Natural killer cell (primary cell): ENCODE measurements at regions of chr20 and their contacts with region 1.

Region 1: DNA sequence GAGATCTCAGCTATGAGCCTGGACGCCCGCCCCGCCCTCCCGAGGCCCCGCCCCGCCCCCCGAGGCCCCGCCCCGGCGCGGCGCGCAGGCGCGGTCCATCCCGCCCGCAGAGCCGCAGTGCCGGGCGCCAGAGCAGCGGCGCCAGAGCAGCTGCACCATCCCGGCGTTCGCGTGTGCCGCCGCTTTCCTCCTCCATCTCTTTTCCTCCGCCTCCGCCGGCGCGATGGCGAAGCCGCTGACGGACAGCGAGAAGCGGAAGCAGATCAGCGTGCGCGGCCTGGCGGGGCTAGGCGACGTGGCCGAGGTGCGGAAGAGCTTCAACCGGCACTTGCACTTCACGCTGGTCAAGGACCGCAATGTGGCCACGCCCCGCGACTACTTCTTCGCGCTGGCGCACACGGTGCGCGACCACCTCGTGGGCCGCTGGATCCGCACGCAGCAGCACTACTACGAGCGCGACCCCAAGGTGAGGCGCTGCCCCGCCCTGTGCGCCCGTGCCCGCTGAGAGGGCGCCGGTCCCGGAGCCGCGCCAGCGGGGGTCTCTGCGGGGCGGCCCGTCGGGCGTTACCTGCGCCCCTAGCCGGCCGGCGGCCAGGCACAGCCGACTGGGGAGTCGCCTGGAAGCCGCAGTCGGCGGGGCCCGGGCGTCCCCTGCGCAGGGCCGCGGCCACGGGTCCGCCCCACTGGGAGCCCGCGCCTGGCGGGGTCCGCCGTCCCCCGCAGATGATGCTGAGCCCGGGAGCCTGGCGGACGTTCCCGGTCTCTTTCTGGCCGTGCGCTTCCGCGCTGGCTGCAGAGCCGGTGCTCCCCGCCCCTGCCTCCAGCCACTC is at the start of gene PYGB:
- DNase-seq: peak; percentile 68 to 89
- ATAC-seq: peak; percentile 89 to 91 (median 90)
- H3K4me3 ChIP-seq: peak within 1 kb of the TSS; percentile 94
- H3K4me3 Mint-ChIP-seq: peak within 1 kb of the TSS; percentile 97
- H3K27ac ChIP-seq: peak within 1 kb of the TSS; percentile 56
- H3K27ac Mint-ChIP-seq: peak within 1 kb of the TSS; percentile 74 to 79
- H3K4me1 ChIP-seq: peaks cover 21% of the 10 kb centered on the region
- H3K4me1 Mint-ChIP-seq: peaks cover 28 to 40% of the 10 kb centered on the region in 2 donors
- H3K27me3 ChIP-seq: no peaks in the 10 kb centered on the region
- H3K27me3 Mint-ChIP-seq: peaks cover 7 to 9% of the 10 kb centered on the region in 2 donors
- CTCF ChIP-seq: no peak
- total RNA-seq, gene PYGB: 39.4 to 55.4 (median 47.0) TPM

Region 2: GRCh38 chr20:25195014-25195961 is 52.9 kb before region 1 on chr20 and contains the start of gene ENTPD6:
- intact Hi-C with region 1: loop called (anchors 1 kb)
- DNase-seq: peak; percentile 96
- ATAC-seq: peak; percentile 84 to 91 (median 91)
- H3K4me3 ChIP-seq: peak within 1 kb of the TSS; percentile 82
- H3K4me3 Mint-ChIP-seq: peak within 1 kb of the TSS; percentile 94
- H3K27ac ChIP-seq: peak within 1 kb of the TSS; percentile 89
- H3K27ac Mint-ChIP-seq: peak within 1 kb of the TSS; percentile 79 to 89
- H3K4me1 ChIP-seq: peaks cover 26% of the 10 kb centered on the region
- H3K4me1 Mint-ChIP-seq: peaks cover 34 to 39% of the 10 kb centered on the region in 2 donors
- H3K27me3 ChIP-seq: no peaks in the 10 kb centered on the region
- H3K27me3 Mint-ChIP-seq: peaks cover 0 to 4% of the 10 kb centered on the region in 2 donors
- CTCF ChIP-seq: no peak
- total RNA-seq, gene ENTPD6: 36.4 to 43.1 (median 41.4) TPM

Region 3: DNA sequence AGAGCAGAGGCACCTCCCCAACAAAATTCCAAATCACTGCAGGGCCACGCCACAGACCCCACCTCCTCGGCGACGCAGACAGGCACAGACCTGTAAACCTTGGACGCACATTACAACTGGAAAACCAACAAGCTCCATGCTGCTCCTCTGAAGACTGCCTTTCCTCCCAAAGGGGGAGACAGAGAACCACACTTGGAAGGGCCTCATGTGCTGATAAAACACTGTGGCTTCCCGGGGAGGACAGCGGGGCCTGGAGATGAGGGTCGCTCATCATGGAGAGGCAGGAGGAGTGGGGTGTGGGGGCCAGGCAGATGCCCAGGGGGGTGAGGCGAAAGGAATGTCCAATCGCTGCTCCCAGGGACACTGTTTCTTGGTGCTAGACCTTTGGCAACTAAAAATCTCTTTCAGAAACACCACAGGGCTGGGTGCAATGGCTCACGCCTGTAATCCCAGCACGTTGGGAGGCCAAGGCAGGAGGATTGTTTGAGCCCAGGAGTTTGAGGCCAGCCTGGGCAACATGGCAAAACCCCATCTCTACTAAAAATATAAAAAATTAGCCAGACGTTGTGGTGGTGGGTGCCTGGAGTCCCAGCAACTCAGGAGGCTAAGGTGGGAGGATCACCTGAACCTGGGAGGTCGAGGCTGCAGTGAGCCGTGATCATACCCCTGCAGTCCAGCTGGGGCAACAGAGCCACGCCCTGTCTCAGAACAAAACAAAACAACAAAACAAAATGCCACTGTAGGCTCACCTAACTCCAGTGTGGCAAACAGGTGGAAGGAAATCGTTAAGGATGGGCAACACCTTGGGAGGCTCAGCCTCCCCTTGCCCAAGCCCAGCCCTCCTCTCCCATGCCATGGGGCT is 88.6 kb after region 1 on chr20:
- intact Hi-C with region 1: no loop called
- DNase-seq: peak in 1 of 2 donors; percentile 13
- ATAC-seq: no peak
- H3K4me3 ChIP-seq: no peak overlapping the region
- H3K4me3 Mint-ChIP-seq: no peak overlapping the region
- H3K27ac ChIP-seq: no peak overlapping the region
- H3K27ac Mint-ChIP-seq: no peak overlapping the region
- H3K4me1 ChIP-seq: peaks cover 6% of the 10 kb centered on the region
- H3K4me1 Mint-ChIP-seq: peaks cover 14 to 19% of the 10 kb centered on the region in 2 donors
- H3K27me3 ChIP-seq: no peaks in the 10 kb centered on the region
- H3K27me3 Mint-ChIP-seq: no peaks in the 10 kb centered on the region
- CTCF ChIP-seq: no peak

Region 4: DNA sequence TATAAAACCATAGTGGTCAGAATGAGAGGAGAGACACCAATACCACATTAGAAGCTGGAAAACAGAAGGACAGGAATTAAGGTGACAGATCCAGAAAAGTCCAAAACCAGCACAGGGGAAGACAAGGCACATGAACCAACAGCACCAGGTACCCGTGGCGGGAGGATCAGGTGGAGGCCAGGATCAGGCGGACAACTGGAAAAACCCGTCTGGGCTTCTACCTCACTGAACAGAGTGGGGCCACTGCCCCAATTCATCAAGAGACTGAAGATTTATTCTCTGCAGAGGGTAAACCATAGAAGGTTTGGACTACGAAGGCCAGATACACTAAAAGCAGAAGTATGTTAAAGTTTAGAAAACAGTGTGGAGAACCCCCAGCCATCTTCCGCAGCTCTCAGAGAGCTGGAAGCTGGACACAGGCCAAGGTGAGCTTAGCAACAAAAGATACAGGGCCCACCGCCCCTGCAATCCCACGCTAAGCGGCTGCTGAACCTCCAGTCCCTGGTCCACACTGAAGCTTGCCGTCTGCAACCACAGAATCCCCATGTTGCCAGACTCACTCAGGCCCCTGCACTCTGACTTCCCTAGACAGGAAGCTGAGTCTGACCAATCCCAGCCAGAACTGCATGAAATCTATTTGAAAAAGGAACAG is 112.6 kb after region 1 on chr20:
- intact Hi-C with region 1: no loop called
- DNase-seq: no peak
- ATAC-seq: peak in 1 of 3 donors; percentile 41
- H3K4me3 ChIP-seq: no peak overlapping the region
- H3K4me3 Mint-ChIP-seq: no peak overlapping the region
- H3K27ac ChIP-seq: no peak overlapping the region
- H3K27ac Mint-ChIP-seq: no peak overlapping the region
- H3K4me1 ChIP-seq: peaks cover 9% of the 10 kb centered on the region
- H3K4me1 Mint-ChIP-seq: peaks cover 20 to 32% of the 10 kb centered on the region in 2 donors
- H3K27me3 ChIP-seq: no peaks in the 10 kb centered on the region
- H3K27me3 Mint-ChIP-seq: no peaks in the 10 kb centered on the region
- CTCF ChIP-seq: no peak

Region 5: DNA sequence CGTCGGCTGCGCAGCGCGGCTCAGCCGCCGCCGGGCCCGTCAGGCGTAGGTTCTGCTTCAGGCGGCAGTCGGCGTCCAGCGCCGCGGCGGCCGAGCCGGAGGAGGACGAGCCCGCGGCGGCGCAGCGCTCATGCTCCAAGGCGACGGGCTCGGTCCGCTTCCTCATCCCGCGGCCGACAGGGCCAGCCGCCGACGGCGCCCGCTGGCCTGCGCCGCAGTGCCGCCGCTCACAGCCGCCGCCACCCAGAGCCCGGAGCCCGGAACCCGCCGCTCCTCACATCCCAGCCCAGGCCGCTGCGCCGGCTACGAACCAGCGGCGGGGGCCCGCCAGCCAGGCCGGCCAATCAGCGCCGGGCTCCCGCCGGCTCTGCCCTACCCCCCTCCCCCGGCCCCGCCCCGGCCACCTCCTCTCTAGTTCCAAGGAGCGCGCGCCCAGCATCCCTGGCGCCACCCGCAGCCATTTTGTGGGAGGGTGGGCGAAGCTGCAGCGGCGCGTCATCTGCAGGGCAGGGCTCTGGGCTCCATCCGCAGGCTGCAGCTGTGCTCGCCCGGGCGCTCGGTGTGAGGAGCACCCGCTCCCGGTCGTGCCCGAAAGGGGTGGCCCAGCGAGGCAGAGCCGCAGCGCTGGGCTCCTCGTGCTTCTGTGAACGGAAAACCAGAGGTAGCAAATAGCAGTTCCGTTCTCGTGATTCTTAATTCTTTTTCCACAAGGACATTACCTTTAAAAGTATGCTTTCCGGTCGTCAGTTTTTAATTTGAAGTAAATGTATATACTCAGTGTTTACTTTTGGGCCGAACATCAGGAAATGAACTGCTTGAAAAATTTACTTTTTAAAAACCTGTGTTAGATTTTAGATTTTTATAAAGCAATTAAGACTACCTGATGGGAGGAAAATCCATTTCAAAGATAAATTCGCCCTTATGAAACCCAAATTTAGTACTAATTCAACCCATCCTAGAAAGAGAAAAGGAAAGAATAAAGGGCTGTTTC is 142.7 kb after region 1 on chr20 and contains the start of gene ABHD12:
- intact Hi-C with region 1: loop called (anchors 1 kb)
- DNase-seq: peak; percentile 87 to 96
- ATAC-seq: peak; percentile 90 to 96 (median 91)
- H3K4me3 ChIP-seq: peak within 1 kb of the TSS; percentile 54
- H3K4me3 Mint-ChIP-seq: peak within 1 kb of the TSS; percentile 90
- H3K27ac ChIP-seq: peak within 1 kb of the TSS; percentile 46
- H3K27ac Mint-ChIP-seq: peak within 1 kb of the TSS; percentile 78 to 91
- H3K4me1 ChIP-seq: peaks cover 6% of the 10 kb centered on the region
- H3K4me1 Mint-ChIP-seq: peaks cover 16 to 17% of the 10 kb centered on the region in 2 donors
- H3K27me3 ChIP-seq: no peaks in the 10 kb centered on the region
- H3K27me3 Mint-ChIP-seq: no peaks in the 10 kb centered on the region
- CTCF ChIP-seq: no peak
- total RNA-seq, gene ABHD12: 28.5 to 34.6 (median 34.5) TPM

Region 6: DNA sequence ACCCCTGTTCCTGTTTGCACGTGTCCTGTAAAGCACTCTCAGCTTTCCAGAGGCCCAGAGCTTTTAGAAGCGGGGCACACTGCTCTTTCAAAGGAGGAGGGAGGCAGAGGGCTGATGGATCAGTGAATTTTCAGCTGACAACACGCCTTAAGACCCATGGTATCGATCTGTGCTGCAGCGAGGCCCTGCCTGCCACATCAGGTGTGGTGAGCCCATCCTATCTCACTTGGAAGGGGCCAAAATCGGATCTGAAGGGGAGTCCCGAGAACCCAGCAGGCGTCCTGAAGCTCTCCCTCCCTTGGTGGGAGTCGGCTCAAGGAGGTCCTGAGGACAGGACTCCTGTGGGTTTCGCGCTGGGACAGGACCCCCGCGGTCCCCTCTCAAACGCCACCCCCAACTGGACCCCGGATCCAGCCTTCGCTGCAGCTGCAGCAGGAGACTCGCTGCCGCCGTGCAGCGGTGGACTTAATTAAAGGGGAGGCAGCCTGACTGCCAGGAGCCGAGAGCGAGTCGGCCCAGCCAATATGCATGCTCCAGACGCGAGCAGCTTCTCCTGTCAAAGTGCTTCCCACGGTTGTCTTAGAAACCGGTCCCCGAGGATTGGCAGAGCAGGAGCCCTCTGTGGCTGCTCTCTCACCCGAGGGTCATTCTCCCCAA is 1028.5 kb after region 1 on chr20:
- intact Hi-C with region 1: no loop called
- DNase-seq: no peak
- ATAC-seq: no peak
- H3K4me3 ChIP-seq: no peak overlapping the region
- H3K4me3 Mint-ChIP-seq: no peak overlapping the region
- H3K27ac ChIP-seq: no peak overlapping the region
- H3K27ac Mint-ChIP-seq: no peak overlapping the region
- H3K4me1 ChIP-seq: no peaks in the 10 kb centered on the region
- H3K4me1 Mint-ChIP-seq: no peaks in the 10 kb centered on the region
- H3K27me3 ChIP-seq: no peaks in the 10 kb centered on the region
- H3K27me3 Mint-ChIP-seq: peaks cover 0 to 5% of the 10 kb centered on the region in 2 donors
- CTCF ChIP-seq: no peak